ENCODE measurements at regions of chr2 and their contacts with region 1.

Region 1: GRCh38 chr2:219560037-219560892 is 11.1 kb downstream of the OBSL1 start:
- DNase-seq: no peak
- ATAC-seq: peak; percentile 75
- H3K4me3 ChIP-seq: no peak overlapping the region
- H3K27ac ChIP-seq: no peak overlapping the region
- H3K4me1 ChIP-seq: no peaks in the 10 kb centered on the region
- H3K27me3 ChIP-seq: no peaks in the 10 kb centered on the region; a peak in 2 of 4 replicates
- CTCF ChIP-seq: peak; percentile 41 to 70 (median 45)
- EP300 ChIP-seq: no peak
- POLR2A ChIP-seq: no peak
- RAD21 ChIP-seq: 0 out of 2 replicates have a peak, but pooled peaks have one; percentile 14

Region 2: DNA sequence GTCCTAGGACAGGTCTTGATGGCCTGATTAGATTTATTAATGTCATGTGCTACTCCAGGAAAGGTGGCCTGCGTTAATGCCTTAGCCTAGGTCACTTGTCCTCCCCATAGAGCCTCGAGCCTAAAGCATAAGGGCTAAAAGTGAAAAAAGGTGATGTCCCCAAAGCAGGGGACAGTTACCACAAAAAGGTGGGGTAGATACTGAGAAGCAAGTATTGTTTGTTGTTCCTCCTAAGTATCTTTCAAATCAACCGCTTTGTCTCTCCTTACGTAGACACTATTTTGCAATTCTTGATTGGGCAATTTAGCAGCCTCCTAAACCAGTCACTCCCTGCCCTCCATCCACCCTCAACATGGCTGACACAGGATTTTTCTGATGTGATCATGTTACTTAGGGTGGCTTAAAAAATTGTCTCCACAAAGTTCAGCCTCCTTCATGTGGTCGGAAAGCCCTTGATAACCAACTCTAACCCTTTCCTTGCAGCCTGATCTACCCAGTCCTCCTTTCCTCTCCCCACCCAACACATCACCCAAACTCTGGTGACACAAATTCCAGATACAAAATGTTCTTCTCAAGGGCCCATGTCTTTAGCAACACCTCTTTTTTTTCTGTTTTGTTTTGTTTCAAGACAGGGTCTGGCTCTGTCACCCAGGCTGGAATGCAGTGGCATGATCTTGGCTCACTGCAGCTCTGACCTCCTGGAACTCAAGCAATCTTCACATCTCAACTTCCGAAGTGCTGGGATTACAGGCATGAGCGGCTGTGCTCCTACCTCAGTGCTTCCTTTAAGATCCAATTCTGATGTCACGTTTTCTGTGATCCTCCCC is 18.7 kb after region 1 on chr2:
- CTCF ChIA-PET with region 1: interaction called, 10 read pairs
- POLR2A ChIA-PET with region 1: no interaction called
- RAD21 ChIA-PET with region 1: no interaction called
- SMC1A ChIA-PET with region 1: no interaction called
- in situ Hi-C with region 1: no loop called
- intact Hi-C with region 1: no loop called
- DNase-seq: no peak
- ATAC-seq: no peak
- H3K4me3 ChIP-seq: no peak overlapping the region
- H3K27ac ChIP-seq: no peak overlapping the region
- H3K4me1 ChIP-seq: no peaks in the 10 kb centered on the region
- H3K27me3 ChIP-seq: peaks cover 1 to 3% of the 10 kb centered on the region in 2 experiments; a peak in 2 of 4 replicates
- CTCF ChIP-seq: no peak
- EP300 ChIP-seq: no peak
- POLR2A ChIP-seq: no peak
- RAD21 ChIP-seq: no peak